Aorta (tissue), 5 donors: ENCODE measurements at regions of chrX and their contacts with region 1.

Region 1: DNA sequence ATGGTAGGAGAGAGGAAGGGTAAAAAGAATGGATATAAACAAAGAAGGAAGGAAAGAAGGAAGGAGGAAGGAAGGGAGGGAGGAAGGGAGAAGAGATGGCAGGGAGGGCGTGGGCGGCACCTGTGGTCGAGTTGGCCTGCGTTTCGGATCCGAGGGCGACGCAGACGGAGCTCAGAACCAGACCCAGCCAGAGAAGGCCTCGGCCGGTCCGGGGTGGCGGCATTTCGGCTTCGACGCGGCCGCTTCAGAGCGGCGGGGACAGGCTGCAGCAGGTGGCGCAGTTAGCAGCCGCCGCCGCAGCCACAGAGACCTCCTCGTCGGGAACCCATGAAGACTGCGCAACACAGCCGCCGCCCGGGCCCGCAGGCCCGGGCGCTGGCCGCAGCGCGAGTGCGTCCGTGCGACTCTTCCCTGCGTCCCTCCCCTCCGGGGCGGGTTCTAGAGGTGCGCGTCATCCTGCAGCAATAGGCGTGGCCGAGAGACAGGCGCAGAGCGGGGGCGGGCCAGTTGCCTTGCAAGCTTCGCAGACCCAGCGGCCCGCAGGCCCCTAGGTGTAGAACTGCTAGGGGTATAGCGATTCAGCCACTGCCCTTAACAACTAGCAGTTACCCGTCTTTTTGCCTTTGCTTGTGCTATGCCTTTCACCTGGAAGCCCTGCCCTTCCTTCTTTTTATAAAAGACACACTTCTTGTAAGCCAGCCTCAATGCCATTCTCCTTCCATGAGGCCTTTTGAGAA is at the start of gene IDS:
- DNase-seq: peak; percentile 94 to 95
- ATAC-seq: peak; percentile 95
- H3K4me3 ChIP-seq: peak within 1 kb of the TSS; percentile 30 to 78
- H3K27ac ChIP-seq: peak within 1 kb of the TSS in 1 of 2 donors; percentile 94
- H3K4me1 ChIP-seq: peaks cover 0 to 2% of the 10 kb centered on the region in 2 donors
- H3K27me3 ChIP-seq: no peaks in the 10 kb centered on the region
- total RNA-seq, gene IDS: 131 to 134 TPM

Region 2: DNA sequence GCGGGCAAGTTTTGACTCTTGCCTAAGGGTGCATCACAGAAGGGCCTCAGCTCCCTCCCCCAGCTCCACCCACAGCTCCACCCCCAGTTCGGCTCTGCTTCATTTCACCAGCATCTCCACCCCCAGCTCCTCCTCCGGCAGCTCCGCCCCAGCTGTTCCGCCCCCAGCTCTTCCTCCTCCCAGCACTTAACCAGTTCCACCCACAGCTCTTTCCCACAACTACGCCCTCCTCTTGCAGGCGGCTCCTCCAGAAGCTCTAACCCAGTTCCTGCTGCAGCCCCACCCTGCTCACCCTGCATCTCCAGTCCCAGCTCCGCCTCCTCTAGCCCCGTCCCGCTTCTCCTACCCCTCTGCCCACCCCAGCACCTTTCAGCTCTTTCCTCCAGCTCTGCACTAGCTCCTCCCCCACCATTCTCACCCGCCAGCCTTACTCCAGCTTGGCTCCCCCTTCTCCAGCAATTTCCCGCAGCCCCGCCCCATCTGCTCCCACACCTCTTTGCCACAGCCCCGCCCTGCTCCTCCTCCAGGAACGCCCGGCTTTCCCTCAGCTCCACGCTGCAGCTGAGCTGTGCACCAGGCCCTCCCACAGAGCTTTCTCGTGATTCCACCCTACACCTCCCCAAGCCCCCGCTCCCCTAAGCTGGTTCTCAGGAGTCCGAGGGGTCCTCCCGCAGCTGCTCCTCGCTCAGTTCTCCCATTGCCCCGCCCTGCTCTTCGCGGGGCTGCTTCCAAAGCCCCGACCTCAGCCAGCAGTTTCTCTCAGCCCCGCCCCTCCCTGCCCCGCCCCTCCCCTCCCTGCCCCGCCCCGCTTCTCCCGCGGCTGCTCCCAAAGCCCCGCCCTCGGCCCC is 34.4 kb after region 1 on chrX:
- intact Hi-C with region 1: loop called in 1 of 2 experiments (anchors 2 kb)
- DNase-seq: peak; percentile 94 to 95
- ATAC-seq: peak; percentile 86
- H3K4me3 ChIP-seq: no peak overlapping the region
- H3K27ac ChIP-seq: peak overlapping the region in 1 of 2 donors; percentile 55
- H3K4me1 ChIP-seq: no peaks in the 10 kb centered on the region
- H3K27me3 ChIP-seq: no peaks in the 10 kb centered on the region